ENCODE measurements at regions of chrX and their contacts with region 1.

Region 1: GRCh38 chrX:18252644-18253359 is 32.1 kb upstream of the BEND2 start:
- DNase-seq: no peak
- H3K4me3 ChIP-seq: no peak overlapping the region
- H3K27ac ChIP-seq: no peak overlapping the region
- H3K4me1 ChIP-seq: no peaks in the 10 kb centered on the region
- H3K27me3 ChIP-seq: no peaks in the 10 kb centered on the region
- CTCF ChIP-seq: no peak

Region 2: DNA sequence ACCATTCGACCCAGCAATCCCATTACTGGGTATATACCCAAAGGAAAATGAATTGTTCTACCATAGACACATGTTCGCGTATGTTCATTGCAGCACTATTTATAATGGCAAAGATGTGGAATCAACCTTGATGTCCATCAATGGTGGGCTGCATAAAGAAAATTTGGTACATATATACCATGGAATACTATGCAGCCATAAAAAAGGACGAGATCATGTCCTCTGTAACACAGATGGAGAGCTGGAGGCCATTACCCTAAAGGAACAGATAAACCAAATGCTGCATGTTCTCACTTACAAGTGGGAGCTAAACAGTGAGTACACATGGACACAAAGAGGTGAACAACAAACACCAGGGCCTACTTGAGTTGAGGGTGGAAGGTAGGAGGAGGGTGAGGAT is 56.6 kb after region 1 on chrX:
- intact Hi-C with region 1: loop called (anchors 10 kb)
- DNase-seq: no peak
- H3K4me3 ChIP-seq: no peak overlapping the region
- H3K27ac ChIP-seq: no peak overlapping the region
- H3K4me1 ChIP-seq: no peaks in the 10 kb centered on the region
- H3K27me3 ChIP-seq: no peaks in the 10 kb centered on the region
- CTCF ChIP-seq: no peak